Left cardiac atrium (tissue), 4 donors: ENCODE measurements at regions of chr4 and their contacts with region 1.

Region 1: DNA sequence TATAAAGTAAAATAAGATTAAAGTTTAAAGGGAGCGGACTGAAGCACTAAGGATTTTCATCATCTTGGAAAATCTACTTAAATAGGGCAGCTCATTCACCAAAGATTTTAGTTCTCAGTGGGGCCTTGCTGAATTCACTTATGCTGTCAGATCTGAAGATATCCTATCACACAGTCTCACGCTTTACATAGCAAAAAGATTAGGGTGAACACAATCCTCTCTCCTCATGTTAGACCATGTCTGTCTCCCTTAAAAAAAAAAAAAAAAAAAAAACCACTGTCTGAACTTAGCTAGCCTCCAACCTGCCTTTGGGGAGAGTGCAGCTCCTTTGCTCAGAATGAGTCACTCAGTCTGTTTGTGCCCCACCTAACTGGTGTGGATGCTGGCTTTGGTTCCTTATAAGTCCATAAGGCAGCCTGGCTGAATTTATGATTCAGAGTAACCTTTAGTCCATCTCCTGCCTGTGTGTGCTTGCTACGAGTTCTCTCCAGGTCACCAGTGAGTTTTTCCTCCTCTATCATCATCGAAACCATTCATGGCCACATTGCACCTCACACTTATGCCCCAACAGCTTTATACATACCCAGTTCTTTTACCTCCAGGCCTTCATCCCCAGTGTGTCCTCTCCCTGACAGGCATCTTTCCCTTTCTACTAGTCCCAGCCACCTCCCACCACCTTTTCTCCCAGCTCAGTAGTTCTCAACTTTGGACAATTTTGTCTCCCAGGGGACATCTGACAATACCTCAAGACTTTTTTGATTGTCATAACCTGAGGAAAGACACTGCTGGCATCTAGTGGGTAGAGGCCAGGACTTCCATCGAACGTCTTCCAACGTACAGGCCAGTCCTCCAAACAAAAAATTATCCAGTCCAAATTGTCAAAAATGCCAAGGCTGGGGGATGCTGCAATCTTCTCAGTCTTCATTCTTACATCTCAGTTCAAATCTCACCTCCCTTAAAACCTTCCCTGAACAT is 220.7 kb upstream of the EMCN start:
- DNase-seq: peak; percentile 28
- ATAC-seq: peak; percentile 34 to 98

Region 2: DNA sequence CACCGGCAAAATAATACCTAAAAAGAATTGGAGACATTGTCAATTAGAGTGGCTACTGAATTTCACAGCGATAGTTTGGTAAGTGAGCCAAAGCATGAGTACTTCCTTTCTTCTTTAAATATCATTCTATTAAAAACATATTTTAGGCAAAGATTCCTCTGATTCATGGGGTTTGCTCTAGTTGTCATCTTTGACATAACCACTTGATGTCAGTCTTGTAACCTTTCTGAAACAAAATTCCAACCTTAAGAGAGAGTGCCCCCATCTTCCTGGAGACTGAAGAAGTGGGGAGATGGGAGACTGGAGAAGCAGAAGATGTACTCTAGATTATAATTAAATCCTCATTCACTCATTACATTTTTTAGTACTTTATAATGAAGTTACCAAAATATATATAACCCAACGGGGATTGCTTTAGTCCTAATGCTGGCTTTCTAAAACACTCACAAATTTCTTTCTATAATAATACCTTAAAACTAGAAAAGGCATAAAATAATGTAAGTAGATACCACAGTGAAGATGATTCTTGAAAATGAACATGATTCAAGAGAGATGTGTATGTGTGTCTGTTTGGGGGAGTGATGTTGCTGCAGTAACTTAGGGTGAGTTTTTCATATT is 317.0 kb before region 1 on chr4:
- intact Hi-C with region 1: loop called in 1 of 2 experiments (anchors 5 kb)
- DNase-seq: no peak
- ATAC-seq: peak; percentile 63

Region 3: GRCh38 chr4:100517864-100518341 is 220.6 kb before region 1 on chr4 and contains the start of gene EMCN:
- intact Hi-C with region 1: loop called in 1 of 2 experiments (anchors 10 kb)
- DNase-seq: peak; percentile 41
- ATAC-seq: peak; percentile 80 to 81
- total RNA-seq, gene EMCN: 31.7 to 67.9 TPM